MCF 10A (cell line): ENCODE measurements at regions of chr17 and their contacts with region 1.

Region 1: GRCh38 chr17:50547035-50547735 is at the start of gene SPATA20:
- DNase-seq: peak; percentile 89
- H3K4me3 Mint-ChIP-seq: peak within 1 kb of the TSS; percentile 79
- H3K27ac Mint-ChIP-seq: no peak within 1 kb of the TSS
- H3K4me1 Mint-ChIP-seq: peaks cover 17% of the 10 kb centered on the region
- H3K27me3 Mint-ChIP-seq: no peaks in the 10 kb centered on the region
- CTCF ChIP-seq: peak; percentile 99
- total RNA-seq, gene SPATA20: 35.3 and 39.4 TPM in 2 replicates

Region 2: GRCh38 chr17:50681263-50682210 is 134.4 kb after region 1 on chr17:
- CTCF ChIA-PET with region 1: interaction called, 4 read pairs
- POLR2A ChIA-PET with region 1: interaction called, 3 read pairs
- intact Hi-C with region 1: loop called (anchors 5 kb)
- DNase-seq: peak; percentile 67
- H3K4me3 Mint-ChIP-seq: no peak overlapping the region
- H3K27ac Mint-ChIP-seq: peak overlapping the region; percentile 32
- H3K4me1 Mint-ChIP-seq: peaks cover 26% of the 10 kb centered on the region
- H3K27me3 Mint-ChIP-seq: no peaks in the 10 kb centered on the region
- CTCF ChIP-seq: peak; percentile 35

Region 3: DNA sequence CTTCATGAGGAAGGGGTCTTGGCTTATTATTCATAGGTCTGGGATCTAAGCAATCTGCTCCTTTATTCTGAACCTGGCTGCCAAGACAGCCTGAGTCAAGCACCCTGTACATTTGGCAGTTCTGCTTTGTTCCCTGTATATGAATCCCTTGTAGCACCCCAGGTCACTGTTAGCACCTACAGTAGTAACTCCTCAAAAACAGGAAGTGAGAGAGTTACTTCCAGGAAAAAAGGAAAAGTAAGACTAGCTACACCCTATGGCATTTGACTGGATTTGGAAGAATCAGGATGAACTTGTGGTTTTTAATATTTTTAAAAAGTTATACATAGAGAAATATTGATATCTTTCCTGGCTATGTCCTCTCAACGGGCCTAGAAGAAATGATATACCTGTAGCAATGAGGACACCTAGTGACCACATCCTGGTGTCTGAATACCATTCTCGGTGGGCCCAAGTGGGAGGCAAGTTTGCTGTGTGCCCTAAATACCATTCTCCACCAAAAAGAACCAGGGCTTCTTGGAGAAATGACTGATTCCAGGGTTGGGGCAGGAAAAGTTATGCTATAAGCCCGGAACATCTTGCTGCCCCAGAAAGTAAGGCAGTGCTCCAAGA is 150.6 kb after region 1 on chr17:
- CTCF ChIA-PET with region 1: interaction called, 31 read pairs
- POLR2A ChIA-PET with region 1: interaction called, 6 read pairs
- intact Hi-C with region 1: loop called (anchors 1 kb)
- DNase-seq: no peak
- H3K4me3 Mint-ChIP-seq: no peak overlapping the region
- H3K27ac Mint-ChIP-seq: peak overlapping the region; percentile 91
- H3K4me1 Mint-ChIP-seq: peaks cover 28% of the 10 kb centered on the region
- H3K27me3 Mint-ChIP-seq: no peaks in the 10 kb centered on the region
- CTCF ChIP-seq: no peak

Region 4: GRCh38 chr17:50949989-50950881 is 403.1 kb after region 1 on chr17:
- CTCF ChIA-PET with region 1: no interaction called
- POLR2A ChIA-PET with region 1: interaction called, 3 read pairs
- intact Hi-C with region 1: loop called (anchors 10 kb)
- DNase-seq: peak; percentile 92
- H3K4me3 Mint-ChIP-seq: peak overlapping the region; percentile 42
- H3K27ac Mint-ChIP-seq: peak overlapping the region; percentile 67
- H3K4me1 Mint-ChIP-seq: peaks cover 49% of the 10 kb centered on the region
- H3K27me3 Mint-ChIP-seq: no peaks in the 10 kb centered on the region
- CTCF ChIP-seq: peak; percentile 89